Keratinocyte (primary cell): ENCODE measurements at regions of chr14 and their contacts with region 1.

Region 1: DNA sequence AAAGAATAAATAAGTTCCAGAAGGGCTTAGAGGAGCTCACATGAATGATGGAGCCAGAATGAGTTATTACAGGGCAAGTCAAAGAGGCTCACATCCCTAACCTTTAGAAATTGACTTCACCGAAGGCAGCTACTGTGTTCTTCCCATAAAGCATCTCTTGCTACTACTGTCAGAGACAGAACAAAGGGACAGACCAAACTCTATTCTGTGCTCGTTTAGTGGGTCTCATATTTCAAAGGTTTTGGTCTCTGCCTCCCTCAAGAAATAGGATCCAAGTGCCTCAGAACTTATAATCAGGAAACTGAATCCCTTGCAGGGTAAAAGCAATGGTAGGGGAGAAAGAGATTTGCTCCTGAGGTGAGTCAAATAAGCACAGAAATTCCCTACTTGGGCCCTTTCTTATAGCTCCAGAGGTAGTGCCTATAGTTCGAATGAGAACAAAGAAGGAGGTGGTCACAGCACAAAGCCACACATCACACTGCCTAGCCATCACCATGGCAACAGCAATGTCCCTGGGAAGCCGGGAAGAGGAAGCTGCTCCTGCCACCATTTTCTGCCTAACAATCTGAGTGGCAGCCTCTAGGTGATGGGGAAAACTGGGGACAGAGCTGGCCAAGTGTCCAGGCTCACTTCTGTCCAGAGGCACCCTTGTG is 294.9 kb downstream of the FOXN3 start:
- DNase-seq: no peak
- H3K4me3 ChIP-seq: no peak overlapping the region
- H3K27ac ChIP-seq: no peak overlapping the region
- H3K4me1 ChIP-seq: no peaks in the 10 kb centered on the region
- H3K27me3 ChIP-seq: peaks cover 17% of the 10 kb centered on the region
- CTCF ChIP-seq: no peak

Region 2: GRCh38 chr14:89085737-89086382 is 36.2 kb before region 1 on chr14:
- dilution Hi-C with region 1: loop called (anchors 5 kb)
- DNase-seq: no peak
- H3K4me3 ChIP-seq: no peak overlapping the region
- H3K27ac ChIP-seq: no peak overlapping the region
- H3K4me1 ChIP-seq: no peaks in the 10 kb centered on the region
- H3K27me3 ChIP-seq: no peaks in the 10 kb centered on the region
- CTCF ChIP-seq: no peak